ENCODE measurements at regions of chr12 and their contacts with region 1.

Region 1: GRCh38 chr12:95336390-95337067 is 118.9 kb downstream of the VEZT start:
- DNase-seq: peak; percentile 86
- H3K4me3 ChIP-seq: peak overlapping the region; percentile 19 to 48; a peak in 2 of 4 replicates
- H3K27ac ChIP-seq: peak overlapping the region; percentile 33 to 92; a peak in 3 of 4 replicates
- H3K4me1 ChIP-seq: peaks cover 0 to 3% of the 10 kb centered on the region in 2 experiments; a peak in 1 of 4 replicates
- H3K27me3 ChIP-seq: no peaks in the 10 kb centered on the region
- CTCF ChIP-seq: peak; percentile 98
- EP300 ChIP-seq: peak in 1 of 2 experiments; percentile 59; a peak in 1 of 4 replicates
- RAD21 ChIP-seq: peak; percentile 99

Region 2: DNA sequence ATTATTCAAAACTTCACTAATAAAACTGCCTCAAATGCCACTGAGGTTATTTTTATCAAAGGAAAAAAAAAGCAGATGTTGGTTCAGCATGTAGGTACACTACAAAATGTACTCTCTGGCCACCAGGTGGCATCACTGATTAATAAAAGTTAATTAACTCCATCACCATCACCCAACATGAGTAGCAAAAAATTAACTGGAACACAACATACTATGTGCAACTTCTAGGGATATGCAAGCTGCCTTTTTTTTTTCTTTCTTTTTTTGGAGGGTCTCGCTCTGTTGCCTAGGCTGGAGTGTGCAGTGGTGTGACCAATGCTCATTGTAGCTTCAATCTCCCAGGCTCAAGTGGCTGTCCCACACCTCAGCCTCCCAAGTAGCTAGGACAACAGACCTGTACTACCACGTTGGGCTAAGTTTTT is 219.3 kb before region 1 on chr12:
- CTCF ChIA-PET with region 1: interaction called, 41 read pairs
- POLR2A ChIA-PET with region 1: interaction called, 3 read pairs
- DNase-seq: peak; percentile 51
- H3K4me3 ChIP-seq: no peak overlapping the region
- H3K27ac ChIP-seq: peak overlapping the region in 1 of 2 experiments; percentile 89; a peak in 2 of 4 replicates
- H3K4me1 ChIP-seq: peaks cover 0 to 28% of the 10 kb centered on the region in 2 experiments; a peak in 3 of 4 replicates
- H3K27me3 ChIP-seq: no peaks in the 10 kb centered on the region
- CTCF ChIP-seq: peak; percentile 83
- EP300 ChIP-seq: no peak
- RAD21 ChIP-seq: peak; percentile 89

Region 3: DNA sequence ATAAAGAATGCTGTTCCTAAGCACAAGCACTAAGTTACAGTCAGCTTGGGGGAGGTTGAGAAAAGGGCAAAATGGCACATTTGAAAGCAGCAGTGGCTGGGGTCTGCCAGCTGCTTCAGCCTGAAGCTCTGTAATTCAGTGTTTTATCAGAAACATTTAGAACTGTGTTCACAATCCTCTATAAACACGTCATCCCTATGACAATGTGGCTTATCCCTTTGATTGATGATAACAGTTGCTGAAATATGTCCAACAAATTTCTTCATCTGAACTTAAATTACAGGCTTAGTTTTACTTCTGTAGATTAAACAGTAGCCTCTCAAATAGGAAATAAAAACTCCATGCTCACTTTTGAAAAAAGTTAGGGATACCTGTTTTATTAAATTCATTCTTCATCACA is 10.1 kb before region 1 on chr12:
- CTCF ChIA-PET with region 1: interaction called, 15 read pairs
- POLR2A ChIA-PET with region 1: no interaction called
- DNase-seq: no peak
- H3K4me3 ChIP-seq: no peak overlapping the region
- H3K27ac ChIP-seq: no peak overlapping the region
- H3K4me1 ChIP-seq: peaks cover 0 to 6% of the 10 kb centered on the region in 2 experiments; a peak in 2 of 4 replicates
- H3K27me3 ChIP-seq: no peaks in the 10 kb centered on the region
- CTCF ChIP-seq: no peak
- EP300 ChIP-seq: no peak
- RAD21 ChIP-seq: no peak

Region 4: DNA sequence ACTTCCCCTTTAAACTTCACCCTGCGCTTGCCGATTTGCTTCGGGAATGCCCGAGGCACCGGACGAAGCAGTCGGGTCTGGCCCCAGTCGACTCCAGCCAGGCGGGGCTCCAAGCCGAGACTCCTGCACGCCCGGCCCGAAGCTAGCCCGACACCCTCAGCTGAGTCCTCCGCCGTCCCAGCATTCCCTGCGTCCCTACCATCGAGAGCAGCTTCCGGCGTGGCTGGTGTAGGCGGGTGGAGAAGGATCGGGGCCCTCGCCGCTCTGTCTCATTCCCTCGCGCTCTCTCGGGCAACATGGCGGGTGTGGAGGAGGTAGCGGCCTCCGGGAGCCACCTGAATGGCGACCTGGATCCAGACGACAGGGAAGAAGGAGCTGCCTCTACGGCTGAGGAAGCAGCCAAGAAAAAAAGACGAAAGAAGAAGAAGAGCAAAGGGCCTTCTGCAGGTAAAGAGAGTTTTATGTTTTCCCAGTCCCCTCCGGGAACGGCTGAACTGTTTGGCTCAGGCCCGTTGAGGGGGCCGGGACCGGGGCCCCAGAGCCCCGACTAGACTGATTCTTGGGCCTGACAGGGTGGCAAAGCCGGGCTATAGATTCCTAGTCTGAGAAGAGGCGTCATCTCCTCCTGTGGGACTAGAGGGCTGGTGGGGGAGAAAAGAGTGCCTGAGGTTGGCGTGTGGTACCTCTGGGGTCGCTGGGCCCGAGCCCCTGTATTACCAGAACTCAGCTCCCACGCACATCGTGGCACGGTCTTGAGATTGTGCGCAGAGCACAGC is 137.5 kb after region 1 on chr12 and contains the start of gene METAP2:
- CTCF ChIA-PET with region 1: interaction called, 12 read pairs
- POLR2A ChIA-PET with region 1: interaction called, 4 read pairs
- DNase-seq: peak; percentile 93
- H3K4me3 ChIP-seq: peak within 1 kb of the TSS; percentile 78 to 95
- H3K27ac ChIP-seq: peak within 1 kb of the TSS; percentile 81 to 89
- H3K4me1 ChIP-seq: peaks cover 0 to 4% of the 10 kb centered on the region in 2 experiments; a peak in 2 of 4 replicates
- H3K27me3 ChIP-seq: no peaks in the 10 kb centered on the region
- CTCF ChIP-seq: no peak
- EP300 ChIP-seq: no peak
- RAD21 ChIP-seq: 0 out of 2 replicates have a peak, but pooled peaks have one; percentile 26
- polyA plus RNA-seq, gene METAP2: 35.8 and 44.7 TPM in 2 replicates

Measured in SK-N-SH (cell line).